Common myeloid progenitor, CD34-positive (primary cell): ENCODE measurements at regions of chr5 and their contacts with region 1.

Region 1: GRCh38 chr5:96614110-96614691 is 48.0 kb upstream of the CAST start:
- DNase-seq: peak; percentile 45 to 65 (median 61)
- H3K4me3 ChIP-seq: no peak overlapping the region
- H3K27ac ChIP-seq: no peak overlapping the region
- H3K4me1 ChIP-seq: peaks cover 0 to 6% (median 3%) of the 10 kb centered on the region in 4 experiments
- H3K27me3 ChIP-seq: no peaks in the 10 kb centered on the region

Region 2: GRCh38 chr5:96527768-96528661 is 86.2 kb before region 1 on chr5:
- CTCF ChIA-PET with region 1: no interaction called
- POLR2A ChIA-PET with region 1: no interaction called
- DNase-seq: no peak
- H3K4me3 ChIP-seq: no peak overlapping the region
- H3K27ac ChIP-seq: no peak overlapping the region
- H3K4me1 ChIP-seq: no peaks in the 10 kb centered on the region
- H3K27me3 ChIP-seq: peaks cover 0 to 2% (median 0%) of the 10 kb centered on the region in 5 experiments

Region 3: GRCh38 chr5:96626956-96627355 is 12.8 kb after region 1 on chr5:
- CTCF ChIA-PET with region 1: no interaction called
- POLR2A ChIA-PET with region 1: no interaction called
- DNase-seq: no peak
- H3K4me3 ChIP-seq: no peak overlapping the region
- H3K27ac ChIP-seq: no peak overlapping the region
- H3K4me1 ChIP-seq: no peaks in the 10 kb centered on the region
- H3K27me3 ChIP-seq: no peaks in the 10 kb centered on the region

Region 4: GRCh38 chr5:96687812-96688453 is 73.7 kb after region 1 on chr5:
- CTCF ChIA-PET with region 1: interaction called, 22 read pairs
- POLR2A ChIA-PET with region 1: no interaction called
- DNase-seq: peak; percentile 52 to 73 (median 71)
- H3K4me3 ChIP-seq: peak overlapping the region in 1 of 7 experiments; percentile 52
- H3K27ac ChIP-seq: no peak overlapping the region
- H3K4me1 ChIP-seq: no peaks in the 10 kb centered on the region
- H3K27me3 ChIP-seq: no peaks in the 10 kb centered on the region

Region 5: GRCh38 chr5:96729156-96729555 is 115.0 kb after region 1 on chr5:
- CTCF ChIA-PET with region 1: interaction called, 17 read pairs
- POLR2A ChIA-PET with region 1: no interaction called
- DNase-seq: no peak
- H3K4me3 ChIP-seq: no peak overlapping the region
- H3K27ac ChIP-seq: no peak overlapping the region
- H3K4me1 ChIP-seq: no peaks in the 10 kb centered on the region
- H3K27me3 ChIP-seq: no peaks in the 10 kb centered on the region

Region 6: DNA sequence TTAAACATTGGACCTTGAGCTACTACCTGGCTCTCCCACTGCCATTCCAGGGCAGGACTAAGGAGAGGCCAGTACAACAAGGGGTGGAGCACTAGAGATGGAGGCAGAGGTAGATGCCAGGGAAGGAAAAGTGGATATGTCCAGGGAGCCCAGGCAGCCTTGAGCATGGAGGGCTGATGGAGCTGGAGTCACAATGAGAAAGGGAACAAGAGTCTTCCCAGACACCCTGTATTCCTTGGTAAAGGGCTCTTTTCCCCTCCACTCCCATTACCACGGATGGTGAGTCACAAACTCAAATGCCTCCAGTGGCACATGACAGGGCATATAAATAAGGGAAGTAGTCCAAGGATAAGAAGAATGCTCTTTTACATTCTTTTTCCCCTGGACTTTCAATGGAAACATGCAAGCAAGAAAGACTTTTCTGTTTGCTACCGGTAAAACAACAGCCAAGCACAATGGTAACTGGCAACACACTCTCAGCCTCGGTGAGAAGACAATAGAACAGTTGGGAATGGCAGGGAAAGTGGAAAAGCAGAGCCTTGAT is 176.8 kb after region 1 on chr5:
- CTCF ChIA-PET with region 1: no interaction called
- POLR2A ChIA-PET with region 1: no interaction called
- DNase-seq: peak; percentile 9 to 37 (median 35)
- H3K4me3 ChIP-seq: no peak overlapping the region
- H3K27ac ChIP-seq: peak overlapping the region; percentile 9 to 50
- H3K4me1 ChIP-seq: peaks cover 0 to 5% (median 0%) of the 10 kb centered on the region in 4 experiments
- H3K27me3 ChIP-seq: no peaks in the 10 kb centered on the region